Left cardiac atrium (tissue), 4 donors: ENCODE measurements at regions of chr19 and their contacts with region 1.

Region 1: DNA sequence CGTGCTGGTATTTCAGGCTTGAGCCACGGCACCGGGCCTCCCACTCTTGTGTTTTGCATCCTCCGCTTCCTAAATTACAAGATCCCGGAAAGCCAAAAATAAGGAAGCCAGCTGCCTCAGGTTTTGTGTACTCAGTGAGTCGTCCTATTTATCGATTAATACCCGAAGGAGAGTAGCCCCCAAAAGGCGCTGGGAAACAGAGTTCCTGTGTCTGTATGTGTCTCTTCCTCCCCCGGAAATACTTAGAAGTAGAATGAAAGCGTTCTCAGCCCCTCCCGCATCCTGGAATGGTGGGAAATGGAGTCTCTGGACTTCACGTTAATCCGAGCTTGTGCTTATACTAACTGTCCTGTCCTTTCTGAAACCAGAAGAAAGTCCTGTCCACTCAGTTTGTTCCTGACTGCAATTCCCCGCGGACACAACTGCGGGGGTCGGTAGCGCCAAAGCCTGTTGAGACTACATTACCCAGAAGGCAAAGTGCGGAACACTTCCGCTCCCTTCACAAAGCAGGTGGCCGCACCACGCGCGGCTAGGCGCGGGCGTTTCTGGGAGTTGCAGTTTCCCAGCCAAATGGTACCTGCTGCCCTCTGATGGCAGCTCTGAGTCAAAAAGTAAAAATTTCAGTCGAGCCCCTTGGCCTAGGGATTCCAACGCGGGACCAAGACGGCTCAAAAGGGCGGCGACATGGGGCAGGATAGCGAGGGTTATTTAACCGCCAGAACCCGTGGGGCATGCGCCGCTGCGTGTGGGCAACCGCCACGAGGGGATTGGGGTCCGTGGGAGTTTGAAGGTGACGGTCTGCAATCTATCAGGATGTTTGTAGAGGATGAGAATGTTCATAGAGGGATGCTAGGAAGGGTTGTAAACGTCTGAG is 2.2 kb upstream of the GSK3A start:
- DNase-seq: peak; percentile 93
- ATAC-seq: peak; percentile 40 to 45

Region 2: DNA sequence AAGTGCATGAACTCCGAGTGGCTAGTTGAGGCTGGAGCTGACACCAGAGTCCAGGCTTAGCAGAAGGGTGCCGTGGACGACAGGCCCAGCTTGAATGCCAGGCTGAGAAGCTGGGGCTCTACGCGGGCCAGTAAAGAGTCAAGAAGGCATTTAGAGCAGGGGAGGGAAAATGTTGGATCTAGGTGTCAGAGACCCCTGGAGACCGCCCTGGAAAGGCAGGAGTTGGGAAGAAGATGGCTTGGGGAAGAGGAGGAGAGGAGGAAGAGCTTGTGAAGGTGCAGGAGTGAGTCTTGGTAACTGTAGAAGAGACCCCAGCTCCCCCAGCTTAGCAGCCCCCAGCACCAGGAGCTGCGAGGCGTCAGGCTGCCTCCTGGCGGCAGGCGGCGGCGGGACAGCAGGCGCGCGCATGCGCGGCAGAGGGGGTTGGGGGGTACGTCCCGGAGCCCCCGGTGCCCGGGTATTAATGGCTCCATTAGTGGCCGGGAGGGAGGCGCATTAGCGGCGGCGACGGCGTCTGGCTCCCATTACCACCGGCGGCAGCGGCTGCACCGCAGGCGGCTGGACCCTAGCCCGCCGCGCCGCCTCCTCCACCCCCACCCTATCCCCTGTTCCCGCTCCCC is 35.1 kb after region 1 on chr19:
- intact Hi-C with region 1: loop called in 1 of 2 experiments (anchors 2 kb)
- DNase-seq: peak; percentile 71
- ATAC-seq: peak; percentile 9 to 14

Region 3: GRCh38 chr19:42290523-42291438 is 46.2 kb after region 1 on chr19:
- intact Hi-C with region 1: loop called in 1 of 2 experiments (anchors 5 kb)
- DNase-seq: no peak
- ATAC-seq: no peak